Adrenal gland (tissue), 19 donors: ENCODE measurements at regions of chr10 and their contacts with region 1.

Region 1: GRCh38 chr10:71212318-71213126 is at the start of gene UNC5B:
- DNase-seq: peak; percentile 87 to 93 (median 88)
- H3K4me3 ChIP-seq: peak within 1 kb of the TSS in 3 of 4 donors; percentile 10 to 86 (median 33)
- H3K27ac ChIP-seq: peak within 1 kb of the TSS in 4 of 5 donors; percentile 19 to 79 (median 63)
- H3K4me1 ChIP-seq: peaks cover 22 to 31% of the 10 kb centered on the region in 2 donors
- H3K27me3 ChIP-seq: no peaks in the 10 kb centered on the region
- CTCF ChIP-seq: peak in 3 of 6 experiments; percentile 34 to 58 (median 48)
- POLR2A ChIP-seq: peak; percentile 84 to 87
- total RNA-seq, gene UNC5B: 2.0 to 27.0 (median 10.3) TPM

Region 2: DNA sequence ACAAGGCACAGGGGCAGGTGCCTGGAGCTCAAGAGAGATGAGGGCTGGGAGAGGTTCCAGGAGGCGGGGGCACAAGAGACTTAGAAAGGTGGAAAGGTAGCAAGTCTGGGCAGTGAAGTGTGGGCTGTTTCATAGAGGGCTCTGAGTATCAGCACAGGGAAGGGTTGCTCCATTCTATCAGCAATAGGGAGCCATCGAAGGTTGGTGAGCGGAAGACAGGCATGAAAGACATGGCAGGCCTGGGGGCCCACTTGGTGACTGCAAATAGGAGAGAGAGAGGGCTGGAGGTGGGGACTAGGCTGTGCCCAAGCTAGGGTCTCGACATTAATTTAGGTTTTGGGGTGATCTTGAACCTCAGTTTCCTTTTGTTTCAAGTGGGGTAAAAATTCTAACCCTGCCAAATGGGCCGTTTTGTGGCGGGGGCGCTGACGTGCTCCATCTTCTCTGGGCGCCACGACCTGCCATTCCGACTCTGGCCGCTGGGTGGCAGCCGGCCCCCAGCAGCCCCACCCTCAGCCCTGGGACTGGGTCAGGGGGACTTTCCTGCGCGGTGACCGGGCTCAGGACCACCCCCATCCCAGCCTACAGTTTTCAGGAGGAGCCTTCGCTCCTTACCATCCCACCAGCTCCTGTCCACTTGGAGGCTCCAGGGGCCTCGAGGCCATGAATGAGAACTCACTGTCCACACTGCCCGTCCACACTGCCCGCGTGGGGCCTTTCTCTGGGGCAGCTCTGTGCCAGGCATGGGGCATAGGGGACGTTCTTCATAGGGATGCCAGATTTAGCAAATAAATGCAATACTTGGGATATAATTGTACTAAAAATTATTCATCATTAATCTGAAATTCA is 286.9 kb before region 1 on chr10:
- intact Hi-C with region 1: loop called (anchors 2 to 10 kb)
- DNase-seq: peak in 6 of 7 donors; percentile 34 to 60 (median 44)
- H3K4me3 ChIP-seq: no peak overlapping the region
- H3K27ac ChIP-seq: no peak overlapping the region
- H3K4me1 ChIP-seq: no peaks in the 10 kb centered on the region
- H3K27me3 ChIP-seq: peaks cover 9% of the 10 kb centered on the region
- CTCF ChIP-seq: peak; percentile 76 to 96 (median 90)
- POLR2A ChIP-seq: no peak